Psoas muscle (tissue), 8 donors: ENCODE measurements at regions of chr7 and their contacts with region 1.

Region 1: DNA sequence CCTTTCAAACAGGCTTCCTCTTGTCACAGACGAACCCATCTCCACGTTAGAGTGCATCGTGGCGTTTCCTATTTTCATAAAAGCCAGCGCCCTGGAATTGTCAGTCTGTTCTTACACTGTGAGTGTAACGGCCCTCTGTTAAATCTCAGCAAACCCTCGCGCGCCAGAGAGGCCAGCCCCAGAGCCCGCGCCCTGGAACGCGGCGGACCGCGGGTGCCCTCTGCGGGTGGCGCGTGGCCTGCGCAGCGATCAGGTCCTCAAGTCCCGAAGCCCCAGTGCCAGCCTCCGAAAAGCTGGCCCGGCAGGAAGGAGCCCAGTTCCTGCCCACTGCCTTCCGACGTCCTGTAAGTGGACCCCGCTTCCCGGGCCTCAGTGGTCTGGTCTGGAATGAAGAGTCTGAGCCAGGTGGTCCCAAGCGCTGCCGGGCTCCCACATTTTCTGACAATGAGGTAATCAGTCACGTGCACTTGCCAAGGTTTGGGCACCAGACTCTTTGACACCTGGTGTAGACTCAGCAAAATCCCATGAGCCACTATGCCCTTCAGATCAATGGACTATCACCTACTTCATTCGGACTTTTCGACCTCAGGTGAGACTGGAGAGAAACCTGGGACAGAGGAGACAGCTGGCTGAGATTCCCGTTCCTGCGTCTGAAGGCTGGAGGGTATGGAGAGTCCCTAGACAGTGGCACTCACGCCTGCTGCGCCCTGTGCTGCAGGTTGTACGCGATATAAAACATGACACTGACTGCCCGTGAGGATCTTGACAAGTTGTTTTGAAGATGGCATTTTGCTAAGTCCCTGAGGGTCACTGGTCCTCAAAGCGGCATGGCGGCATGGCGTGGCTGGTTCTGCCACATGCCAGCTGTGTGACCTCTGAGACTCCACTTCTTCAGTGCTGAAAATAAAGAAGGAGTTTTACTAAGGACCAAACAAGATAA is 109.4 kb upstream of the LANCL2 start:
- DNase-seq: peak; percentile 86 to 90
- ATAC-seq: peak; percentile 92 to 97 (median 96)
- H3K4me3 ChIP-seq: peak overlapping the region; percentile 80
- H3K27ac ChIP-seq: peak overlapping the region; percentile 37
- H3K4me1 ChIP-seq: peaks cover 3% of the 10 kb centered on the region
- H3K27me3 ChIP-seq: peaks cover 0 to 3% (median 0%) of the 10 kb centered on the region in 3 donors
- CTCF ChIP-seq: peak; percentile 83

Region 2: GRCh38 chr7:54788664-54789063 is 467.1 kb before region 1 on chr7:
- intact Hi-C with region 1: loop called in 1 of 2 experiments (anchors 1 kb)
- DNase-seq: peak in 1 of 2 donors; percentile 25
- ATAC-seq: peak; percentile 87 to 98 (median 97)
- H3K4me3 ChIP-seq: no peak overlapping the region
- H3K27ac ChIP-seq: no peak overlapping the region
- H3K4me1 ChIP-seq: peaks cover 4% of the 10 kb centered on the region
- H3K27me3 ChIP-seq: no peaks in the 10 kb centered on the region
- CTCF ChIP-seq: peak; percentile 74

Region 3: DNA sequence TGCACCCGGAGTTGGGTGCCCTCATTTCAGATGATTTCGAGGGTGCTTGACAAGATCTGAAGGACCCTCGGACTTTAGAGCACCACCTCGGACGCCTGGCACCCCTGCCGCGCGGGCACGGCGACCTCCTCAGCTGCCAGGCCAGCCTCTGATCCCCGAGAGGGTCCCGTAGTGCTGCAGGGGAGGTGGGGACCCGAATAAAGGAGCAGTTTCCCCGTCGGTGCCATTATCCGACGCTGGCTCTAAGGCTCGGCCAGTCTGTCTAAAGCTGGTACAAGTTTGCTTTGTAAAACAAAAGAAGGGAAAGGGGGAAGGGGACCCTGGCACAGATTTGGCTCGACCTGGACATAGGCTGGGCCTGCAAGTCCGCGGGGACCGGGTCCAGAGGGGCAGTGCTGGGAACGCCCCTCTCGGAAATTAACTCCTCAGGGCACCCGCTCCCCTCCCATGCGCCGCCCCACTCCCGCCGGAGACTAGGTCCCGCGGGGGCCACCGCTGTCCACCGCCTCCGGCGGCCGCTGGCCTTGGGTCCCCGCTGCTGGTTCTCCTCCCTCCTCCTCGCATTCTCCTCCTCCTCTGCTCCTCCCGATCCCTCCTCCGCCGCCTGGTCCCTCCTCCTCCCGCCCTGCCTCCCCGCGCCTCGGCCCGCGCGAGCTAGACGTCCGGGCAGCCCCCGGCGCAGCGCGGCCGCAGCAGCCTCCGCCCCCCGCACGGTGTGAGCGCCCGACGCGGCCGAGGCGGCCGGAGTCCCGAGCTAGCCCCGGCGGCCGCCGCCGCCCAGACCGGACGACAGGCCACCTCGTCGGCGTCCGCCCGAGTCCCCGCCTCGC is 237.2 kb before region 1 on chr7 and contains the start of gene EGFR:
- intact Hi-C with region 1: loop called in 1 of 2 experiments (anchors 10 kb)
- DNase-seq: peak; percentile 80 to 92
- ATAC-seq: peak; percentile 62 to 77 (median 72)
- H3K4me3 ChIP-seq: peak within 1 kb of the TSS; percentile 90
- H3K27ac ChIP-seq: peak within 1 kb of the TSS; percentile 87
- H3K4me1 ChIP-seq: peaks cover 23% of the 10 kb centered on the region
- H3K27me3 ChIP-seq: no peaks in the 10 kb centered on the region
- CTCF ChIP-seq: no peak
- total RNA-seq, gene EGFR: 14.1 to 39.7 (median 22.1) TPM

Region 4: GRCh38 chr7:55065079-55065478 is 190.7 kb before region 1 on chr7:
- intact Hi-C with region 1: loop called in 1 of 2 experiments (anchors 10 kb)
- DNase-seq: peak; percentile 59 to 80
- ATAC-seq: peak; percentile 55 to 77 (median 70)
- H3K4me3 ChIP-seq: peak overlapping the region; percentile 49
- H3K27ac ChIP-seq: peak overlapping the region; percentile 81
- H3K4me1 ChIP-seq: peaks cover 58% of the 10 kb centered on the region
- H3K27me3 ChIP-seq: no peaks in the 10 kb centered on the region
- CTCF ChIP-seq: no peak